ENCODE measurements at regions of chr3 and their contacts with region 1.

Region 1: DNA sequence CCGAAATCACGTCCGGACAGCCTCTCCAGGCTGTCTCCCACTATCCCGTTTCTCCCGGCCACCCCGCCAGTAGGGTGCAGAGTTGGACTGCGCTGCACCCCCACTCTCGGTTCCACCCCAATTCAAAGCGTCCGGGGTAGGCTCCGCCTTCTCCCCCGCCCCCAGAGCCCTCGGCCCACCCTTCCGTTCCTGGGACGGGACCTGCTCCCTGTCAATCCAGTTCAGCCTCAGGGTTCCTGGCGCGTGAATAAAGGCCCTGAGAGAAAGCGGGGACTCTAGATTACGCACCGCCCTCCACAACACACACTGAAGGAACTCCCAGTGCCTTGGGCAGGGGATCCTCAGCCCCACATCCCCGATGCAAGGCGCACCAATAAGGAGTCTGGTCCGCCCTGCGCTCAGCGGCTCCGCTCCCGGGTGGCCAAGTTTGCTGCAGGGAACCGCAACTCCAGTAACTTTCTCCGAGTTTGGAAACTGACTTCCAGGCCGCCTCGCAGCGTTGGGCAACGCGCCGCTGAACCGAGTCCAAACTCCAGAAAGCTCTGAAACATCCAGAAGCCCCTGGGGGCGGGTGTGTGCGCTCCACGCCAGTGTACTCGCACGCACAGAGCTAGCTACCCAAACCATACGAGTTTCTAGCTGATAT is 1.9 kb downstream of the ADAMTS9 start:
- DNase-seq: peak; percentile 81 to 94
- H3K4me3 ChIP-seq: peak overlapping the region; percentile 90
- H3K27ac ChIP-seq: peak overlapping the region; percentile 90
- H3K4me1 ChIP-seq: peaks cover 13% of the 10 kb centered on the region; the same call in 1 of the 2 replicates
- H3K27me3 ChIP-seq: no peaks in the 10 kb centered on the region
- CTCF ChIP-seq: no peak

Region 2: GRCh38 chr3:64977291-64978100 is 291.6 kb after region 1 on chr3:
- CTCF ChIA-PET with region 1: no interaction called
- POLR2A ChIA-PET with region 1: interaction called, 8 read pairs
- intact Hi-C with region 1: loop called (anchors 1 kb)
- DNase-seq: peak; percentile 78 to 95
- H3K4me3 ChIP-seq: peak overlapping the region; percentile 37
- H3K27ac ChIP-seq: peak overlapping the region; percentile 99
- H3K4me1 ChIP-seq: peaks cover 30% of the 10 kb centered on the region
- H3K27me3 ChIP-seq: no peaks in the 10 kb centered on the region
- CTCF ChIP-seq: no peak

Region 3: GRCh38 chr3:65030847-65031558 is 345.1 kb after region 1 on chr3:
- CTCF ChIA-PET with region 1: no interaction called
- POLR2A ChIA-PET with region 1: interaction called, 18 read pairs
- intact Hi-C with region 1: loop called (anchors 5 kb)
- DNase-seq: peak; percentile 24 to 85
- H3K4me3 ChIP-seq: no peak overlapping the region
- H3K27ac ChIP-seq: no peak overlapping the region
- H3K4me1 ChIP-seq: peaks cover 15% of the 10 kb centered on the region; the same call in 1 of the 2 replicates
- H3K27me3 ChIP-seq: no peaks in the 10 kb centered on the region
- CTCF ChIP-seq: no peak

Region 4: DNA sequence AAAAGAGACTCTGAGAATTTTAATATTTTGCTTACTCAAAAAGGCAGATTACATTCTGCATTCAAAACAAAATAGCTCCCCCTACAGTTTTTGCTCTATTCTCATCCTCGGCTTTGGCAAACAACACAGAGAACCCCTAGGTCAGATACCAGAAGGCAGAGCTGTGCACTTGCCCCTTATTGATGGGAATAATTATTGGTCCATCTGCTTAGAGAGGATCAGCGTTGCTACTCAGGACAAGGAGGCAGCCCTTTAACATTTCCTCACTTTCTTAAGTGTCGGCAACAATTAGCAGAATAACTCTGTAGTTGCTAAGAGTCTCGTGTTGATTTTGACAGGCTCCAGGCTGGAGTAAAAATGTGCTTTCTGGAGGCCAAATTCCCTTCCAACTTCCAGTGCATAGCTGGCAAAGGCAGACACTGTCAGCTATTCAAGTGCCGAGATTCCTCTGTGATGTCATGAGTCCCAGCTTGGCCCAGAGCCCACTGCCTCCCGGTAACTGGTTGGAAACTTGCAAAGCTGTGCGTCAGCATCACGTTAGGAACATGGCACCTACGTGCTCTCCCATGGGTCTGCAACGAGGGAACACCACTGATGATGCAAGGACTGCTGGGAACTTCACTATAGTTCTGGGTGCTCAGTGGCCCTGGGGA is 484.6 kb after region 1 on chr3:
- CTCF ChIA-PET with region 1: no interaction called
- POLR2A ChIA-PET with region 1: no interaction called
- intact Hi-C with region 1: loop called (anchors 10 kb)
- DNase-seq: no peak
- H3K4me3 ChIP-seq: no peak overlapping the region
- H3K27ac ChIP-seq: no peak overlapping the region
- H3K4me1 ChIP-seq: no peaks in the 10 kb centered on the region
- H3K27me3 ChIP-seq: no peaks in the 10 kb centered on the region
- CTCF ChIP-seq: peak; percentile 52

Region 5: DNA sequence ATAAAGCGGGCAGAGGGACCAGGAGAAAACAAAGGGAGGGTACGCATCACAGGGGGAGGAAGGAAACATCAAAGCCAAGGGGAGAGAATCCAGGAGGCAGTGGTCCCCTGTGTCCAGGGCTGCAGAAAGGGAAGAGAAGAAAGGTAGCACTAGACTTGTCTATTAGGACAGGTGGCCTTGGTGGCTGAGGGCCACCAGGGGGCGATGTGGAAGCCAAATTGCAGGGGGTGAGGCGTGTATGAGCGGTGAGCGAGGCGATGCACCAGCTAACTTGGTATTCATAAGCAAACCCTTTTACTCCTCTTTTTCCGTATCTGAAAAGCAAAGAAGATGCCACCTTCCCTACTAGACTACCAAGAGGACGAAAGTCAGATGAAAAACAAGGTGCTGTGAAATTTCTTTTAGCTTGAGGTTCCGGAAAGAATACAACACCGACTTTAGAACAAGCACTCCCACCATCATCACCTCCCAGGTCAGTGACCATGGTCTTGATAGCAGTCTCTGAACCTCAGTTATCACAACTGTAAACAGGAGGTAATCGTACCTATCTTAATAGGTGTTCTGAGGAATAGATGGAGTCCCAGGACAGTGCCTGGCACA is 656.3 kb after region 1 on chr3:
- CTCF ChIA-PET with region 1: no interaction called
- POLR2A ChIA-PET with region 1: no interaction called
- intact Hi-C with region 1: loop called (anchors 5 kb)
- DNase-seq: peak in 1 of 2 experiments; percentile 37
- H3K4me3 ChIP-seq: no peak overlapping the region
- H3K27ac ChIP-seq: no peak overlapping the region
- H3K4me1 ChIP-seq: no peaks in the 10 kb centered on the region
- H3K27me3 ChIP-seq: no peaks in the 10 kb centered on the region
- CTCF ChIP-seq: peak; percentile 70

Region 6: DNA sequence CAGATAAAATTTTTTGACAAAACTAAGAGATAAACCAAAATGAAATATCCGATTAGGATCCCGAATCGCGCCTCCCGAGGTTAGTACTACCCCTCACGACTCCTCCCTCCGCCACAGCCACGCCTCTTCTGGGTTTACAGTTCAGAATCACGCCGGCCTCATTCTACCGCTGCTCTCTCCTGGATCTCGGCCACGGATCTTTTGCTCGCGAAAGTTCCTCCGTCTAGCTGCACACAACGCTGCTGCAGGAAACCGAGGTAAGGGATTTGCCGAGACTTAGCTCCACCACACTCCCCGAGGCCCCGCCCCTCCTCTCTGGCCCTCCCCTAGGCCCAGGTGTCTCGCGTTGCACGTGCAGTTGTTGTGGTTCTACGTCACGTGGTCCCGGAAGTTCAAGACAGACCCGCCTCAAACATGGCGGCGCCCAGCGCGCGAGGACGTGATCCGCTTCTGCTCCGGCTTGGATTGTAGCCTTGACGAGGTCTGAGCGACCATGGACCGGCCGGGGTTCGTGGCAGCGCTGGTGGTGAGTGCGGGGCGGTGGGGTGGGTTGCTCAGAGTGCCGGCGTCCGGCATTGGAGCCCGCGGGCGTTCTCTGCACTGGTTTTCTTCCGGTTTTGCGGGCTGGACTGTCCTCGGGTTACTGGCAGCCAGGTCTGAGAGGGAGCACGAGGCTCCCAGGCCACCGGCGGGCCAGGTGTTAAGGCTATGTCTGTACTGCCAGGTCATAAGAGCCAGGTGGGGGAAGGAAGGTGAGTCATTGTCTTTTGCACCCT is 1534.9 kb after region 1 on chr3 and contains the start of gene SLC25A26:
- CTCF ChIA-PET with region 1: no interaction called
- POLR2A ChIA-PET with region 1: interaction called, 3 read pairs
- intact Hi-C with region 1: loop called (anchors 2 kb)
- DNase-seq: peak; percentile 85 to 93
- H3K4me3 ChIP-seq: peak within 1 kb of the TSS; percentile 87
- H3K27ac ChIP-seq: peak within 1 kb of the TSS; percentile 82
- H3K4me1 ChIP-seq: peaks cover 9% of the 10 kb centered on the region; the same call in 1 of the 2 replicates
- H3K27me3 ChIP-seq: no peaks in the 10 kb centered on the region
- CTCF ChIP-seq: no peak
- total RNA-seq, gene SLC25A26: 20.8 and 30.1 TPM in 2 replicates

Measured in PC-9 (cell line).